Mucosa of descending colon (tissue), 3 donors: ENCODE measurements at regions of chr12 and their contacts with region 1.

Region 1: GRCh38 chr12:67355578-67356379 is 86.6 kb downstream of the CAND1 start:
- DNase-seq: peak in 1 of 3 donors; percentile 31
- ATAC-seq: peak; percentile 67
- H3K4me3 ChIP-seq: no peak overlapping the region
- H3K4me1 ChIP-seq: no peaks in the 10 kb centered on the region
- CTCF ChIP-seq: peak; percentile 6

Region 2: GRCh38 chr12:67107751-67108269 is 248.0 kb before region 1 on chr12:
- intact Hi-C with region 1: no loop called
- DNase-seq: no peak
- ATAC-seq: no peak
- H3K4me3 ChIP-seq: no peak overlapping the region
- H3K4me1 ChIP-seq: no peaks in the 10 kb centered on the region
- CTCF ChIP-seq: no peak

Region 3: GRCh38 chr12:67441736-67442346 is 86.1 kb after region 1 on chr12:
- intact Hi-C with region 1: loop called (anchors 5 kb)
- DNase-seq: peak; percentile 88 to 98 (median 94)
- ATAC-seq: peak; percentile 98
- H3K4me3 ChIP-seq: no peak overlapping the region
- H3K4me1 ChIP-seq: peaks cover 14% of the 10 kb centered on the region
- CTCF ChIP-seq: peak; percentile 71

Region 4: GRCh38 chr12:67943226-67943892 is 587.6 kb after region 1 on chr12:
- intact Hi-C with region 1: loop called (anchors 5 to 10 kb)
- DNase-seq: peak in 1 of 3 donors; percentile 98
- ATAC-seq: peak; percentile 83
- H3K4me3 ChIP-seq: no peak overlapping the region
- H3K4me1 ChIP-seq: peaks cover 8% of the 10 kb centered on the region
- CTCF ChIP-seq: peak; percentile 47